T-cell (primary cell): ENCODE measurements at regions of chr12 and their contacts with region 1.

Region 1: DNA sequence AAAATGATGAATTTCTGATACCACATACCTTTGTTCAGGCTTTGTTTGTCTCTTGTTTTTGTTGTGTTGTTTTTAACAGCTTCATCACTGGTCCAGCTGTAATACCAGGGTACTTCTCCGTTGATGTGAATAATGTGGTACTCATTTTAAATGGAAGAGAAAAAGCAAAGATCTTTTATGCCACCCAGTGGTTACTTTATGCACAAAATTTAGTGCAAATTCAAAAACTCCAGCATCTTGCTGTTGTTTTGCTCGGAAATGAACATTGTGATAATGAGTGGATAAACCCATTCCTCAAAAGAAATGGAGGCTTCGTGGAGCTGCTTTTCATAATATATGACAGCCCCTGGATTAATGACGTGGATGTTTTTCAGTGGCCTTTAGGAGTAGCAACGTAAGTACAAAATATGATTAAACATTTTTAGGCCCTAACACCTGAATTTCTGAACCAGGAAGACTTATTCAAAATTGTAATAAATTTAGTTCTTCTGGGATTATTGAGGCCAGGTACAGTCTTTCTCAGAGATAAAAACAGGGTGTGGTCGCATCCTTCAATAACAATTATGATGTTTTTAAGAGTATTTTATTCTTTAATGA is 22.4 kb downstream of the RXYLT1 start:
- DNase-seq: peak in 1 of 35 experiments; percentile 45
- ATAC-seq: no peak
- H3K4me3 ChIP-seq: no peak overlapping the region
- H3K4me3 Mint-ChIP-seq: no peak overlapping the region
- H3K27ac ChIP-seq: no peak overlapping the region
- H3K27ac Mint-ChIP-seq: no peak overlapping the region
- H3K4me1 ChIP-seq: no peaks in the 10 kb centered on the region
- H3K4me1 Mint-ChIP-seq: no peaks in the 10 kb centered on the region
- H3K27me3 ChIP-seq: no peaks in the 10 kb centered on the region
- H3K27me3 Mint-ChIP-seq: no peaks in the 10 kb centered on the region

Region 2: DNA sequence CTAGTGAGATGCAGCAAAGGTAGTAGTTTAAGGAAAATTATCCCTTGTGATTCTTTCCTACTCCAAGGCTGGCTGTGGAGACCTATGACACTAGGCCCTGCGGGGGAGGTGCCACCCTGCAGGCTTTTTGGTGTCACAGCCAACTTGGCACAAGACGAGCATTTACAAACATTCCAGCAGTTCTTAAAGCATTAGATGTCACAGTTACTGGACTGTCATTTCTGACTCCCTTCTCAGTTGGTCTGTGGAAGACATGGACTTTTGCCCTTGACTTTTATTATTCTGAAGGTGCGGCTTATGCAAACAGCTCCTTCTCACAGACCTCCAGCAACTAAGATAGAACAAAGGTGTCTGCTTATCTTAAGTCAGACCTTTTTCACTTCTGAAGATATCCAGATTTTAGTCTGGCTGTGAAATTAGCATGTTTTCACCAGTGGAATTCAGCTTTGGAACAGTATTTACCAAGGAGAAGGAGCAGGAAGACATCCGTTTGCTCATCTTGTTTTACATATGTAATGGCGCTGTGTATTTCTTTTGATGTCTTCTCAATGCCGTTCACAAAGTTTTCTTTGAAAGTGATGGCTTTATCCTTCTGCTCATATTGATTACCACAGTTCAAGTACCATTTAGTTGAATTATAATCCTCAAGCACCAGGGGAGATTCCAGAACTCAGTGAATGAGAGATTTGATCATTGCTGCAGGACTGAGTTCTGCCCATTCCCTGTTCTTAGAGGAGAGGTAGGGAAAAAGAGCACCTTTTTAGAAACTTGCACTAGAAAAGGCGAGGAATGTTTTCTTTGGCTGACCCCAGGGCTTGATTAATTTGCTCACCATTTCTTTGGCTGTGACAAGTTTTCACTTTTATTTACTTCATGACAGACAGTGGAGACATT is 60.4 kb after region 1 on chr12:
- CTCF ChIA-PET with region 1: interaction called, 3 to 13 read pairs
- POLR2A ChIA-PET with region 1: no interaction called
- DNase-seq: no peak
- ATAC-seq: no peak
- H3K4me3 ChIP-seq: no peak overlapping the region
- H3K4me3 Mint-ChIP-seq: no peak overlapping the region
- H3K27ac ChIP-seq: no peak overlapping the region
- H3K27ac Mint-ChIP-seq: no peak overlapping the region
- H3K4me1 ChIP-seq: no peaks in the 10 kb centered on the region
- H3K4me1 Mint-ChIP-seq: no peaks in the 10 kb centered on the region
- H3K27me3 ChIP-seq: peaks cover 0 to 7% of the 10 kb centered on the region in 2 experiments
- H3K27me3 Mint-ChIP-seq: peaks cover 0 to 5% of the 10 kb centered on the region in 2 donors

Region 3: DNA sequence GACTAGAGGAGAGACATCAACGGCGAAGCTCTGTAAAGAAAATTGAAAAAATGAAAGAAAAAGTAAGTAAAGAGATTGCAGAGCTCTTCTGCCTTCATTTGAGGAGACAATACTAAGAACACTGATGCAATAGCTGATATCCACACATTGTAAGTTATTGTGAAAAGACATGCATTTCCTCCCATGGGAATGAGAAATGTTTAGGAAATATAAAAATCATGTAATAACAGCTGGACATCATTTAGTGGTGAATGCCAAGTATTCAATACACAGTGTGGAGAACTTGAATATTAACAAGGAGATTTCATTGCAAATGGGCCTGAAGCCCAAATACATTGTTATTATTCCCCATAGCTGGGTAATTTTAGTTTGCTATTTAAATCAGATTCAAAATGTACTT is 240.8 kb after region 1 on chr12:
- CTCF ChIA-PET with region 1: no interaction called
- POLR2A ChIA-PET with region 1: no interaction called
- DNase-seq: no peak
- ATAC-seq: no peak
- H3K4me3 ChIP-seq: no peak overlapping the region
- H3K4me3 Mint-ChIP-seq: no peak overlapping the region
- H3K27ac ChIP-seq: no peak overlapping the region
- H3K27ac Mint-ChIP-seq: no peak overlapping the region
- H3K4me1 ChIP-seq: no peaks in the 10 kb centered on the region
- H3K4me1 Mint-ChIP-seq: no peaks in the 10 kb centered on the region
- H3K27me3 ChIP-seq: peaks cover 0 to 3% of the 10 kb centered on the region in 2 experiments
- H3K27me3 Mint-ChIP-seq: peaks cover 0 to 4% of the 10 kb centered on the region in 2 donors